ENCODE measurements at regions of chr3 and their contacts with region 1.

Region 1: GRCh38 chr3:42190701-42191462 is 75.1 kb downstream of the CCK start:
- DNase-seq: peak; percentile 78
- H3K4me3 Mint-ChIP-seq: no peak overlapping the region
- H3K27ac Mint-ChIP-seq: no peak overlapping the region
- H3K4me1 Mint-ChIP-seq: no peaks in the 10 kb centered on the region
- H3K27me3 Mint-ChIP-seq: no peaks in the 10 kb centered on the region
- CTCF ChIP-seq: peak; percentile 85

Region 2: DNA sequence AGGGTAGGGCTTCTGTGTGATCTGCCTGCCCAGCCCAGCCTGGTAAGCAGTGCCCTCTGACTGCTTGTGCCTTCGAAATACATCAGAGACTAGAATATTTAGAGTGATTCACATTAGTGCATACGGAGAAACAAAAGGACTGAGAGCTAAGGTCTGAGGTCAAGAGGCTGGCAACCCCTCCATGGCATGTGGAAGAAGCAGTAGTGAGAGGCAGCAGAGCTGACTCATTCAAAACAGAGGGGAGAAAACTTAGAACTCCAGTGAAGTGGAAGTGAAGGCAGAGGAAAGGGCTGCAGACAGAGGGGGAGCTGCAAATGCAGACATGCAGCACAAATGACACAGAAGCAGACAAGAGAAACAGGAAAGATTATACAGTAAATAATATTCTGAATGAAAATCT is 290.6 kb before region 1 on chr3:
- CTCF ChIA-PET with region 1: interaction called, 41 read pairs
- POLR2A ChIA-PET with region 1: no interaction called
- intact Hi-C with region 1: no loop called
- DNase-seq: peak; percentile 0
- H3K4me3 Mint-ChIP-seq: no peak overlapping the region
- H3K27ac Mint-ChIP-seq: no peak overlapping the region
- H3K4me1 Mint-ChIP-seq: no peaks in the 10 kb centered on the region
- H3K27me3 Mint-ChIP-seq: no peaks in the 10 kb centered on the region
- CTCF ChIP-seq: no peak

Region 3: DNA sequence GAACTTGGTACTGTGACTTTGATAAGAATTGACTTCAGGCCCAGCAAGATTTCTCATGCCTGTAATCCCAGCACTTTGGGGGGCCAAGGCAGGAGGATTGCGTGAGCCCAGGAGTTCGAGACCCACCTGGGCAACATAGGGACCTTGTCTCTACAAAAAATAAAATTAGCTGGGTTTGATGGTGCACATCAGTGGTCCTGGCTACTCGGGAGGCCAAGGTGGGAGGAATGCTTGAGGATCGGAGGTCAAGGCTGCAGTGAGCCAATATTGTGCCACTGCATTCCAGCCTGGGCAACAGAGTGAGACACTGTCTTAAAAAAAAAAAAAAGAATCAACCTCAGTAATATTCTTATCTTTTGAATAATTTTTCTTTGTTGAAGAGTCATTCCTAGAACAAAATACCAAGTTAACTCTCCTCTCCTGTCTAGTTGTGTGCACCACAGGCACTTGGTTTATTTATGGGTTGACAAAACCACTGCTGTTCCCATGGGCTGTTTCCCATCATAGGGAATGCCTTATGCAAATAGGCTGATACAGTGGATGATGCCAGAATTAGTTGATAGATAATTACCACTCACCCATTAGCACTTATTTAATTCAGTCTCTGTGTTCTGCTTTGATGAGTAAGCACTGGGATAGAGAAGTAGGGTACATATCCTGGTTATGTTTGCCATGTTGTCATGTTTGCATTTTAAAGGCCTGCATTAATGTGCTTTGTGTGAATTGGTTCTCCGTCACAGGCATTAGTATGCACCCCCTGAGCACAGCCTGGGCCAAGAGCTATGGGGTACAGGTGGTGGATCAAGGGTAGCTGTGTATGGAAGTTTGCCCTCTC is 66.8 kb before region 1 on chr3:
- CTCF ChIA-PET with region 1: interaction called, 369 read pairs
- POLR2A ChIA-PET with region 1: interaction called, 10 read pairs
- intact Hi-C with region 1: no loop called
- DNase-seq: no peak
- H3K4me3 Mint-ChIP-seq: peak overlapping the region; percentile 58
- H3K27ac Mint-ChIP-seq: peak overlapping the region; percentile 90
- H3K4me1 Mint-ChIP-seq: peaks cover 32% of the 10 kb centered on the region
- H3K27me3 Mint-ChIP-seq: no peaks in the 10 kb centered on the region
- CTCF ChIP-seq: no peak

Region 4: DNA sequence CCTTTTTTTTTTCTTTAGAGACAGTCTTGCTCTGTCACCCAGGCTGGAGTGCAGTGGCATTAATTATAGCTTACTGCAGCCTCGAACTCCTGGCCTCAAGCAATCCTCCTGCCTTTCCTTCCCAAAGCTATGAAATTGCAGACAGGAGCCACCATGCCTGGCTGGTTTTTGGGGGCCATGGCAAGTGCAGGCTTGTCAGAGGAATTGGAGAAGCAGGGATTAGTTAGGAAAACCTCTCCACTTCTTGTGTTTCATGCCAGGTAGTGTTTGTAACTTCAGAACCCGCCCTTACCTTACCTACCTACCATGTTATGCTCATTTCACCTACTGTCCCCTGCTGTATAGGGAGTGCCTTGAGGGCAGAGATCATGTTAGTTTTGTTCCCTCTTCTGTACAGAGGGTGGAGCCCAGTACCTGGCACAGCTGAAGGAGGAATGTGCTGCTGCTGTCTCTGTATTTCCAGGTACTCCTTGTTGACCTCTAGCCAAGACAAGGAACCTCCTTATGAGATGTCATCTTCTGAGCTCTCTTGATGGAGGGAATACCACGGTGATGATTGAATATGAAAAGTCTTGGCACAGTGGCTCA is 55.9 kb before region 1 on chr3:
- CTCF ChIA-PET with region 1: interaction called, 50 read pairs
- POLR2A ChIA-PET with region 1: interaction called, 8 read pairs
- intact Hi-C with region 1: no loop called
- DNase-seq: peak; percentile 57
- H3K4me3 Mint-ChIP-seq: peak overlapping the region; percentile 11
- H3K27ac Mint-ChIP-seq: peak overlapping the region; percentile 61
- H3K4me1 Mint-ChIP-seq: peaks cover 13% of the 10 kb centered on the region
- H3K27me3 Mint-ChIP-seq: no peaks in the 10 kb centered on the region
- CTCF ChIP-seq: no peak

Region 5: GRCh38 chr3:42169579-42170120 is 21.2 kb before region 1 on chr3:
- CTCF ChIA-PET with region 1: interaction called, 12 read pairs
- POLR2A ChIA-PET with region 1: no interaction called
- intact Hi-C with region 1: no loop called
- DNase-seq: no peak
- H3K4me3 Mint-ChIP-seq: no peak overlapping the region
- H3K27ac Mint-ChIP-seq: no peak overlapping the region
- H3K4me1 Mint-ChIP-seq: peaks cover 6% of the 10 kb centered on the region
- H3K27me3 Mint-ChIP-seq: no peaks in the 10 kb centered on the region
- CTCF ChIP-seq: no peak

Region 6: DNA sequence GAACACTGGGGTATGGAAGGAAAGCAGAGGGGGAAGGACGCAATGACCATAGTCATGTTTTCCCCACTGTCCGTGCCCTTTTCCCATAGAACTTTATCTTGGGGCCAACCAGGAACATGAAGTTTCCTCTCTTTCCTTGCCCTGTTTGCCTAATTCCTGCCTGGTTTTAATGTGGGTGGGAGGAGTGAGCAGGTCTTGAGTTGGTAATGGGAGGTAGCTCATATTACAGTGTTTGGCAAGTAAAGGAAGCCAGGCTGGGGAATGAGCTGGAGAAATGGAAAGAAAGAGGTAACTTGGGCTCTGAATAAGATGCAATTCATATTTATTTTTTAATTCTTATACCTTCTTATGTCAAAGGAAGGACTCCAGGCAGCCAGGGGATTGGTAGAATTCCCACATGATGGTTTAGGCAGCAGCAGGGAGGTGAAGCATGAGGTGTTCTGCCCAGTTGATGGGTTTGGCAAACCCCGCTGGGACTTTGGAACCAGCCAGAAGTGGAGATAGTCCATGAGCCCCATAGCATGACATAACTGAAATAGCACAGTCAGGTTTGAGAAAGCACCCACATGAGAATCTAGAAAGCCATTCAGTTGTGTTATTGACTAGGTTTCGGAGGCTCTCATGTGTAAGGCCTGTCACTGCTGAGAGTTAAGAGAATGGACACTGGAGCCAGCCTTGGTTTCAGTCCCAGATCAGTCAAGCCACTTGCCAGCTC is 15.1 kb after region 1 on chr3:
- CTCF ChIA-PET with region 1: interaction called, 33 read pairs
- POLR2A ChIA-PET with region 1: no interaction called
- intact Hi-C with region 1: no loop called
- DNase-seq: no peak
- H3K4me3 Mint-ChIP-seq: no peak overlapping the region
- H3K27ac Mint-ChIP-seq: no peak overlapping the region
- H3K4me1 Mint-ChIP-seq: no peaks in the 10 kb centered on the region
- H3K27me3 Mint-ChIP-seq: no peaks in the 10 kb centered on the region
- CTCF ChIP-seq: no peak

Region 7: DNA sequence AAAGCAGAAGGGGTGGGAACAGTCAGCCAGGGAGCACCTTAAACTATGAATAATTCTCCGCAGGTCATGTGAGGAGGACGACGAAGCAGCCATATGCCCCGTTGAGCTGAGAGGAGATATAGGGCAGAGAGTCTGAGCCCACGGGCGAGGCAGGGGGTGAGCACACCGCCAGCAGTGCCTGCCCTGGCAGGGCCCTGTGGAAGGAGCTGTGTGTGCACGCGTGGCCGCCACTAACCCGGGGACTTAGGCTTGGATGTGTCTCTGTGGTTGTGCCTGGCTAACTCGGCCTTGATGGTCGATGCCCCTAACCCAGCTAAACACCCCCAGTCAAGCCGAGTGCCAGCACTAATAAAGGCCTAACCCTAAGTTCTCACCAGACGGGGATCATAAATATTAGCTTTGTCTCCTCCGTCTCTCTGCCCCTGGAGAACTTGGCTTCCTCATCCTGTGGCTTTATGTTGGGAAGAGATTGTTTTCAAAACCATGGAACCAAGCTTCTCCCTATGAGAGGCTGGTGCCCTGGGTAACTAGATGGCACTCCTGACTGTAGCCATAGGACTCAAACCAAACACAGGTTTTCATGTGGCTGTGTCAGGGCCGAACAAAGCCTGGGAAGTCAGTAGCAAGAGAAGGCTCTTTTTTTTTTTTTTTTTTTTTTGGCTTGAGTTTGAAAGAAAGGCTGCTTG is 29.7 kb after region 1 on chr3:
- CTCF ChIA-PET with region 1: interaction called, 19 read pairs
- POLR2A ChIA-PET with region 1: no interaction called
- intact Hi-C with region 1: no loop called
- DNase-seq: no peak
- H3K4me3 Mint-ChIP-seq: no peak overlapping the region
- H3K27ac Mint-ChIP-seq: no peak overlapping the region
- H3K4me1 Mint-ChIP-seq: peaks cover 6% of the 10 kb centered on the region
- H3K27me3 Mint-ChIP-seq: no peaks in the 10 kb centered on the region
- CTCF ChIP-seq: no peak